Tibial artery (tissue), 4 donors: ENCODE measurements at regions of chr7 and their contacts with region 1.

Region 1: GRCh38 chr7:155804897-155805825 is 7.1 kb downstream of the SHH start:
- DNase-seq: no peak
- H3K4me3 ChIP-seq: peak overlapping the region; percentile 29 to 43
- H3K27ac ChIP-seq: no peak overlapping the region
- H3K4me1 ChIP-seq: peaks cover 0 to 66% (median 59%) of the 10 kb centered on the region in 4 donors
- H3K27me3 ChIP-seq: peaks cover 0 to 98% of the 10 kb centered on the region in 2 donors
- CTCF ChIP-seq: no peak

Region 2: DNA sequence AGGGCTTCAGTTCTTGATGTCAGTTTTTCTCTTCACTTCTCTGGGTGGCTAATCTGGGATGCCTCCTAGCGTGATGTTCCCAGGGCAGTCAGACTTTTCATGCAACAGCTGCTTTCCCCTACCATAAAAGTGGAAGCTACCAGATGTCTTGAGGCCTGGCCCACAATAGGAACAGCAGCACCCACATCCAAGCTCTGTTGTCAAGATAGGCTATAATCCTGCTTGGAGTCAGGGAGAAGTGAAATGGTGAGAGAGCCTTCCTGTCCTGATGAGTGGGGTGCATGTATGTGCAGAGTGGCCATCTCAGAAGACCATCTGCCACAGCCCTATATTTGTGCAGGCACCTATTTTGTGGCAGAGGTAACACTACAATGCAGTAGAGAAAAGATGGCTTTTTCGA is 627.1 kb before region 1 on chr7:
- intact Hi-C with region 1: no loop called
- DNase-seq: no peak
- H3K4me3 ChIP-seq: no peak overlapping the region
- H3K27ac ChIP-seq: no peak overlapping the region
- H3K4me1 ChIP-seq: no peaks in the 10 kb centered on the region
- H3K27me3 ChIP-seq: no peaks in the 10 kb centered on the region
- CTCF ChIP-seq: no peak

Region 3: GRCh38 chr7:156816943-156817572 is 1011.9 kb after region 1 on chr7:
- intact Hi-C with region 1: loop called (anchors 10 kb)
- DNase-seq: no peak
- H3K4me3 ChIP-seq: no peak overlapping the region
- H3K27ac ChIP-seq: no peak overlapping the region
- H3K4me1 ChIP-seq: no peaks in the 10 kb centered on the region
- H3K27me3 ChIP-seq: no peaks in the 10 kb centered on the region
- CTCF ChIP-seq: peak in 1 of 2 experiments; percentile 16